ENCODE measurements at regions of chr12 and their contacts with region 1.

Region 1: DNA sequence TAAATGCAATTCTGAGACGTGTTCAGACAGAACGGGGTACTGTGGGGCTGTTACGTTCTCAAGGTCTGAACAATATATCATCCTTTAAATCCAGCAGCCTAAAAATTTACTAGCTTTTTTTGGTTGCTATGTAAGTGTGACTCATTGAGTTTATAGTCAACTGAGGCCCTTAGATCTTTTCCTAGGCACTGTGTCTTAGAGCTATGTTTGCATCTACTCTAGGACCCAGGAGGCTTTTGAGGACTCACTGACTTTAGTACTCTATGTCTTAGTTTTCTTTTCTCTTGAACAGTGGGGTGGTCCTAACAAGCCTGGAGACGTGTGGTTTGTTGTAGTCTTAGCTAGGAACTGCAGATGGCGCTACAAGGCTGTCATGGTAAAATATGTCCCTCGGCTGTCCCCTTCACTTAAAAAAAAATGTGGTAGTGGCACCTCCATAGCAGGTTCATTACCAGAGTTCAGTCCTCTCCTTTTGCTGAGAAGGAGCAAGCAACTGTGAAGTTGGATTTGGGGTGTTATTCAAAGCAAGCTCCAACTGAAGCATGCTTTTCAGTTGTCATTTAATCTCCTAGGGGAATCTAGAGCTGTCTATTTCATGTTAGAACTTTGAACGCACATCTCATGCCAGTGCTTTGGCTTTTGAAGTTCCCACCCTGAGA is 8.7 kb upstream of the SPATS2 start:
- DNase-seq: peak; percentile 32 to 69 (median 63)
- H3K4me3 ChIP-seq: no peak overlapping the region
- H3K4me3 Mint-ChIP-seq: no peak overlapping the region
- H3K27ac ChIP-seq: no peak overlapping the region
- H3K27ac Mint-ChIP-seq: peak overlapping the region in 1 of 8 donors; percentile 10
- H3K4me1 ChIP-seq: peaks cover 7% of the 10 kb centered on the region
- H3K4me1 Mint-ChIP-seq: peaks cover 2 to 4% (median 3%) of the 10 kb centered on the region in 3 donors
- H3K27me3 ChIP-seq: no peaks in the 10 kb centered on the region
- H3K27me3 Mint-ChIP-seq: peaks cover 14 to 43% of the 10 kb centered on the region in 2 donors

Region 2: DNA sequence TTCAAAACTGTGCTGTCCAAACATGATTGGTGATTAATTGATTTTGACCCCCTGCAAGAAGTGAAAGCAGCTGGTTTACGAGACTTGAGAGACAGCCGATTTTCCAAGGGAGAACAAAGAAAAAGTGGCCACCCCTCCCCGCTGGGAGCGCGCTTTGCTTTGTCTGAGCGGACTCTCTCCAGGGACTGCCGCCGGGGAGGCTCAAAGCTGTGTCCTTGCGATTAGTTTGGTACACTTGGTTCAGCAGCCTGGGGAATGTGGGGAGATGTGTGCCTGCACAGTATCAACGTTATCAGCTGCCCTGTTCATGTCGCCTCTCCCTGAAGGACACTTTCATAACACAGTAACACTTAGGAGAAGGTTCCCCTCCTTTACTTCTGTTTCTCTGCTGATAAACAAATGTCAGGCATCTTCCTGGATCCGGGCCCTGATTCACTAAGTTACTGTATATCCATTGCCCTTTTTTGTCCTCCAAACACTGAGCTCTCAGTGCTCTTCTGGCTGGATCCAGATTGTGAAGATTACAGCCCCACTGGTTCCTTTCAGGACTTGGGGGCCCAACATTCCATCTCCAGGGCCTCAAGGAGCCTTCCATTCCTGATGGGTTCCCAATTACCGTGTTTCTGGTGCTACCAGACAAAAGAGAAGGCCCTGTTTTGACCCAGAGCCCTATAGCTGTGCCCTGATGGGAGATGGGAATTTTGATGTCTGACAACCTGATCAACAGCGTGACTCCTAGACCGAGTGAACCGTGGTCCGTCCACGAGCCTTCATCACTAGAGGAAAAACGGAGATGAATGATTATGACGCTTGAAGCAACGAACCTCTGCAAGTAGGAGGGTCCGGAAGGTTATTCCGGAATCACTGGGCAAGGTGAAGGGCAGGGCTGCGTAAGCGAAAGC is 125.4 kb before region 1 on chr12:
- CTCF ChIA-PET with region 1: no interaction called
- POLR2A ChIA-PET with region 1: no interaction called
- DNase-seq: no peak
- H3K4me3 ChIP-seq: no peak overlapping the region
- H3K4me3 Mint-ChIP-seq: peak overlapping the region; percentile 27 to 84 (median 63)
- H3K27ac ChIP-seq: peak overlapping the region; percentile 66
- H3K27ac Mint-ChIP-seq: peak overlapping the region in 3 of 8 donors; percentile 38 to 73 (median 72)
- H3K4me1 ChIP-seq: peaks cover 5% of the 10 kb centered on the region
- H3K4me1 Mint-ChIP-seq: peaks cover 0 to 10% (median 4%) of the 10 kb centered on the region in 3 donors
- H3K27me3 ChIP-seq: no peaks in the 10 kb centered on the region
- H3K27me3 Mint-ChIP-seq: peaks cover 0 to 1% of the 10 kb centered on the region in 2 donors

Region 3: DNA sequence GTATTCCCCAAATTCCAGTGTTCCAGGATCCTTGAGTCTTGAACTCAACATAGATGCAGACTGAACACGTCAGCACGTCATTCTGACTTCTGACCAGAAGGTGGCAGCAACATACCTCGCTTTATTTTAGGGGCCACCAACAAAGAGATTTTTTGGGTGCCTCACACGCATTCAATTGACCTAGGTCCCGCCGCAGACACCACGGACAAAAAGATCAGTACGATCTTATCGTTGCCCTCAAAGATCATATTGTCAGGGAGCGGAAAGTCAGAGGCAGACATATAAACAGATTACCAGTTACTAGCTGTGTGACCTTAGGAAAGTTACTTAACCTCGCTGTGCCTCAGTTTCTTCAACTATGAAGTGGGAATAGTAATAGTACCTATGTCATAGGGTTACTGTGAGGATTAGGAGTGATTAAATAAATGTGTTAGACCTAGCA is 70.2 kb before region 1 on chr12:
- CTCF ChIA-PET with region 1: interaction called, 29 read pairs
- POLR2A ChIA-PET with region 1: no interaction called
- DNase-seq: peak; percentile 51 to 75 (median 67)
- H3K4me3 ChIP-seq: no peak overlapping the region
- H3K4me3 Mint-ChIP-seq: no peak overlapping the region
- H3K27ac ChIP-seq: no peak overlapping the region
- H3K27ac Mint-ChIP-seq: no peak overlapping the region
- H3K4me1 ChIP-seq: no peaks in the 10 kb centered on the region
- H3K4me1 Mint-ChIP-seq: no peaks in the 10 kb centered on the region
- H3K27me3 ChIP-seq: peaks cover 7% of the 10 kb centered on the region
- H3K27me3 Mint-ChIP-seq: peaks cover 16 to 48% of the 10 kb centered on the region in 2 donors

Region 4: GRCh38 chr12:49342066-49342913 is 16.3 kb before region 1 on chr12:
- CTCF ChIA-PET with region 1: interaction called, 42 read pairs
- POLR2A ChIA-PET with region 1: interaction called, 3 read pairs
- DNase-seq: peak; percentile 57 to 81 (median 63)
- H3K4me3 ChIP-seq: peak overlapping the region; percentile 63
- H3K4me3 Mint-ChIP-seq: peak overlapping the region; percentile 62 to 91 (median 75)
- H3K27ac ChIP-seq: no peak overlapping the region
- H3K27ac Mint-ChIP-seq: peak overlapping the region in 4 of 8 donors; percentile 12 to 36 (median 32)
- H3K4me1 ChIP-seq: peaks cover 47% of the 10 kb centered on the region
- H3K4me1 Mint-ChIP-seq: peaks cover 40 to 64% (median 48%) of the 10 kb centered on the region in 3 donors
- H3K27me3 ChIP-seq: peaks cover 43% of the 10 kb centered on the region
- H3K27me3 Mint-ChIP-seq: peaks cover 35 to 44% of the 10 kb centered on the region in 2 donors

Region 5: DNA sequence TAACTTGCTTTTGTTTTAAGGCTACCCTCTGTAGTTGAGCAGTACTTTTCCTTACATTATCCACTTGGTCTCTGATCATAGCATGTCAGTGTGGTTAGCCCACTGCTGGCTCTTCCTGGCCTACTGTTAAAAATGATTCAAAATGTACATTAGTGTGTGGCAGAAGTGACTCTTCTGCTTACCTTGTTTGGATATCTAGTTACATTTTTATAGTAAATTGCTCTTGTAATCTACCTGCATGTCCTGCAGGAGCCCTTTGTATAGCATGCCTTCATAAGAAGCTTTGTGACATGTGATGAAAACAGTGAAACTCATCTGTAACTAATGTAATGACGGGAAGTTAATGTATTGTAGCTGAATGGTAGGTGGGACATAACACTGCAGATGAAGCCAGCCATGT is 16.8 kb after region 1 on chr12:
- CTCF ChIA-PET with region 1: interaction called, 13 read pairs
- POLR2A ChIA-PET with region 1: no interaction called
- DNase-seq: no peak
- H3K4me3 ChIP-seq: no peak overlapping the region
- H3K4me3 Mint-ChIP-seq: no peak overlapping the region
- H3K27ac ChIP-seq: no peak overlapping the region
- H3K27ac Mint-ChIP-seq: no peak overlapping the region
- H3K4me1 ChIP-seq: no peaks in the 10 kb centered on the region
- H3K4me1 Mint-ChIP-seq: peaks cover 1 to 6% (median 2%) of the 10 kb centered on the region in 3 donors
- H3K27me3 ChIP-seq: no peaks in the 10 kb centered on the region
- H3K27me3 Mint-ChIP-seq: no peaks in the 10 kb centered on the region

Region 6: GRCh38 chr12:49553512-49554088 is 195.0 kb after region 1 on chr12:
- CTCF ChIA-PET with region 1: interaction called, 10 read pairs
- POLR2A ChIA-PET with region 1: no interaction called
- DNase-seq: peak in 2 of 5 donors; percentile 31 to 46
- H3K4me3 ChIP-seq: no peak overlapping the region
- H3K4me3 Mint-ChIP-seq: peak overlapping the region in 1 of 7 donors; percentile 4
- H3K27ac ChIP-seq: no peak overlapping the region
- H3K27ac Mint-ChIP-seq: peak overlapping the region in 3 of 8 donors; percentile 20 to 81 (median 71)
- H3K4me1 ChIP-seq: peaks cover 5% of the 10 kb centered on the region
- H3K4me1 Mint-ChIP-seq: peaks cover 4 to 11% (median 6%) of the 10 kb centered on the region in 3 donors
- H3K27me3 ChIP-seq: peaks cover 2% of the 10 kb centered on the region
- H3K27me3 Mint-ChIP-seq: peaks cover 3% of the 10 kb centered on the region in 2 donors

Measured in CD8-positive, alpha-beta memory T cell (primary cell).